Caco-2 (cell line): ENCODE measurements at regions of chr6 and their contacts with region 1.

Region 1: GRCh38 chr6:36350681-36351571 is 14.2 kb upstream of the BNIP5 start:
- DNase-seq: peak in 1 of 2 experiments; percentile 12
- H3K4me3 ChIP-seq: no peak overlapping the region
- H3K4me3 Mint-ChIP-seq: no peak overlapping the region
- H3K27ac Mint-ChIP-seq: no peak overlapping the region
- H3K4me1 ChIP-seq: peaks cover 20% of the 10 kb centered on the region
- H3K4me1 Mint-ChIP-seq: peaks cover 19% of the 10 kb centered on the region
- H3K27me3 ChIP-seq: no peaks in the 10 kb centered on the region
- H3K27me3 Mint-ChIP-seq: no peaks in the 10 kb centered on the region
- CTCF ChIP-seq: no peak

Region 2: GRCh38 chr6:36340618-36341454 is 10.1 kb before region 1 on chr6:
- CTCF ChIA-PET with region 1: interaction called, 14 read pairs
- POLR2A ChIA-PET with region 1: no interaction called
- intact Hi-C with region 1: no loop called
- DNase-seq: peak; percentile 79 to 82
- H3K4me3 ChIP-seq: peak overlapping the region; percentile 28
- H3K4me3 Mint-ChIP-seq: peak overlapping the region; percentile 77
- H3K27ac Mint-ChIP-seq: no peak overlapping the region
- H3K4me1 ChIP-seq: peaks cover 28% of the 10 kb centered on the region
- H3K4me1 Mint-ChIP-seq: no peaks in the 10 kb centered on the region
- H3K27me3 ChIP-seq: no peaks in the 10 kb centered on the region
- H3K27me3 Mint-ChIP-seq: no peaks in the 10 kb centered on the region
- CTCF ChIP-seq: peak; percentile 91 to 92

Region 3: GRCh38 chr6:36463676-36464075 is 112.8 kb after region 1 on chr6:
- CTCF ChIA-PET with region 1: no interaction called
- POLR2A ChIA-PET with region 1: no interaction called
- intact Hi-C with region 1: no loop called
- DNase-seq: no peak
- H3K4me3 ChIP-seq: no peak overlapping the region
- H3K4me3 Mint-ChIP-seq: no peak overlapping the region
- H3K27ac Mint-ChIP-seq: no peak overlapping the region
- H3K4me1 ChIP-seq: no peaks in the 10 kb centered on the region
- H3K4me1 Mint-ChIP-seq: no peaks in the 10 kb centered on the region
- H3K27me3 ChIP-seq: no peaks in the 10 kb centered on the region
- H3K27me3 Mint-ChIP-seq: no peaks in the 10 kb centered on the region
- CTCF ChIP-seq: no peak